ENCODE measurements at regions of chr19 and their contacts with region 1.

Region 1: DNA sequence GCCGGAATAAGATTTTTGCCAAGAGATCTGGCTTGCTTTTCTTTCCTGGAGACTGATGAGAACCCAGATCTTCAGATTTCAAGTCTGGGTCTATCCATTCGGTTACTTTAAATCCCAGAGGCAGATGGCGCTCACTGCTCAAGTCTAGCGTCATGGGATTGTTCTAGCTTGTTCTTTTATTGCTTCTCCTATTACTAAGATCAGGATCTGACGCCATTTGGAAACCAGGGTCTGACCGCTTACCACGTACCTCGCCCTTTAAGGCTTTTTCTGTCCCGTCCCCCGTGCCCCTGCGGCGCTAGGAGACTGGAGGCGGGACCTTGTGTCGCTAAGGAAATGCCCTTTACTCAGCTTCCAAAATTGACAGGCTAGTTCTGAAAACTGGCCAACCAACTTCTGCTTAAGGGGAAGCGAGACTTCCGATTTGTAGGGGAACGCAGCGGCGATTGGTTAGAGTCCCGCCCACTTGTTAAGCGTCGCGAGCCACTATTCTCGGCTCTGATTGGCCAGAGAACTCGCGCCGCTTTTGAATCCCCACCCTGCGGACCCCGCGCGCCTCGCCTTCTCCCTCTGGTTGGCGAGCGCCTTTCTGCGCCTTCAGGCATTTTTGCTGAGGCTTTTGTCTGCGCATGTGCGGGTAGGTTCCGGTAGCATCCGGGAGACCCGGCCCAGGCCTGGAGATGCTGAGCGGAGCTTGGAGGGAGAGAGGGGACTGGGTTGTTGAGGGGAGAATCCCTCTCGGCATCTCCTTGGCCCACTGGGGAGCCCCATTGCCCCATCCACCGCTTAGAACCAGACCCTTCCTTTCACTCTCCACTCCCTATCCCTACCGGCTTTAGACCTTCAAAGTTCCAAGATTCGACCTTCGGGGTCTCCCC is 3.8 kb upstream of the C19orf84 start:
- DNase-seq: peak; percentile 100
- H3K4me3 Mint-ChIP-seq: peak overlapping the region; percentile 82
- H3K27ac Mint-ChIP-seq: peak overlapping the region; percentile 78
- H3K4me1 Mint-ChIP-seq: peaks cover 7% of the 10 kb centered on the region
- H3K27me3 Mint-ChIP-seq: no peaks in the 10 kb centered on the region
- CTCF ChIP-seq: no peak

Region 2: DNA sequence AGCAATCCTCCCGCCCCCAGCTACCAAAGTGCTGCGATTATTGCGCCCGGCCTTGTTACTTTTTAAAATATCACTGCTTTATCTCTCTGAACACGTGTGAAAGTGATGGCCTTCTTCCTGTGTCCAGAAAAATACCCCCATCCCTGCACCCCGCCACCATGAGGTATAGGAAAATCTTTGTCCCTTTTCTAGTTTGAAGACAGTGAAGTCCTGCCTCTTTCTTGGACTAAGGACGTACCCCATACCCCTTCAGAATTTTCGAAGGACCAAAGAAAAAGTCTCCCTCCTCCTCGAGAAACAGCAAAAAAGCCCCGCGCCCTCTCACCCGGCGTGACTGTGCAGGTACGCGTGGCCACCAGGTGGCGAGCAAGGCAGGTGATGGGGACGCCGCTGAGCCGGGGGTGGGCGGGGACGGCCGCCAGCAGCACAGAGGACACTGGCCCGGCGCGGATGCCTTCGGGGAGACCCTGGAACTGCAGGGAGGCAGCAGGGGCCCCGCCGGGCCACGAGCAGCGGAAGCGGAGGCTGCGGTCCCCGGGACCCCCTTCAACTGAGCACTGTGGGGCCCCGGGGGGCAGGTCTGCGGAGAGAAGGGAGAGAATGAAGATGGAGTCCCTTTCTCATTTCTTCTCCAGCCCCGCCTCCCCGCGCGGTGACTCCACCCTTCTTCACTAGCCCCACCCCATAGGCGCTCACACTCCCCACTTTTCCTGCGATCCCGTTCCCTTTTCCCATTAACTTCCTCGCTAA is 55.5 kb before region 1 on chr19:
- CTCF ChIA-PET with region 1: interaction called, 15 read pairs
- POLR2A ChIA-PET with region 1: interaction called, 6 read pairs
- intact Hi-C with region 1: loop called (anchors 2 kb)
- DNase-seq: peak; percentile 83
- H3K4me3 Mint-ChIP-seq: peak overlapping the region; percentile 76
- H3K27ac Mint-ChIP-seq: peak overlapping the region; percentile 33
- H3K4me1 Mint-ChIP-seq: peaks cover 11% of the 10 kb centered on the region
- H3K27me3 Mint-ChIP-seq: no peaks in the 10 kb centered on the region
- CTCF ChIP-seq: peak; percentile 86

Region 3: DNA sequence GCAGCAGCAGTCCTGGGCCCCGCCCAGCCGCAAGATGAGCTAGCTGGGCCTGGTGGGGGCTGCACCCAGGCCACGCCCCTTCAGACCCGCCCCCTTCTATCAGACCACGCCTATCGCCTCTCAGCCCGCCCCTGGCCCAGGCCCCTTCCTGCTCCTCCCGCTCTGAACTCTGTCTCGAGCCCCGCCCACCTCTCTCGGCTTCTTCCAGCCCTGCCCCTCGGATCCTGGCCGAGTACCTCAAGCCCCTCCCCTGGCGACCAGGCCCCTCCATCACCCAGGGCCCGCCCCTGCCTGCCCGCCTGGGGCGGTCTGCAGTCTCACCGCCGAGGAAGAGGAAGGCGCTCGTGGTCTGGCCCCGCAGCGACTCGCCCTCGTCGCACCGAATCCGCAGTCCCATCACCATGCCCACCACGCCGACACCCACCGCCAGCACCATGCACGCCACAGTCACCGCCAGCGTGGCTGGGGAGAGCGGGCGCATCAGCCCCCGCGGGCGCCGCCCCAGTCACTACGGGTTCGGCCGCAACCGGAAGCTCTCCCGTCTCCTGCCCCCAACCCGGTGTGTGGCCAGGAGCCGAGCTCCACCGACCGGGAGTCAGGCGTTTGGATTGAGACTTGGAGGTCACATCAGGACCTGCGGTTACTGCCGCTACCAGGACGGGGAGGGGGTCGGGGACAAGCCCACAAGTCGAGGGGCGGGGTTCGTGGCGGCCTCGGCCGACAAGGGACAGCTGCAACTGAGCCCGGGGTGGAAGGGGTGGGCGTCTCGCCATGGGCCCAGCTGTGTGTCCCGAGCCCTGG is 26.4 kb before region 1 on chr19:
- CTCF ChIA-PET with region 1: interaction called, 9 read pairs
- POLR2A ChIA-PET with region 1: interaction called, 11 read pairs
- intact Hi-C with region 1: loop called (anchors 1 kb)
- DNase-seq: peak; percentile 98
- H3K4me3 Mint-ChIP-seq: peak overlapping the region; percentile 96
- H3K27ac Mint-ChIP-seq: peak overlapping the region; percentile 90
- H3K4me1 Mint-ChIP-seq: peaks cover 26% of the 10 kb centered on the region
- H3K27me3 Mint-ChIP-seq: no peaks in the 10 kb centered on the region
- CTCF ChIP-seq: no peak

Region 4: GRCh38 chr19:51407511-51408131 is 13.4 kb after region 1 on chr19:
- CTCF ChIA-PET with region 1: interaction called, 18 read pairs
- POLR2A ChIA-PET with region 1: interaction called, 3 read pairs
- intact Hi-C with region 1: no loop called
- DNase-seq: peak; percentile 26
- H3K4me3 Mint-ChIP-seq: no peak overlapping the region
- H3K27ac Mint-ChIP-seq: no peak overlapping the region
- H3K4me1 Mint-ChIP-seq: no peaks in the 10 kb centered on the region
- H3K27me3 Mint-ChIP-seq: no peaks in the 10 kb centered on the region
- CTCF ChIP-seq: no peak

Region 5: DNA sequence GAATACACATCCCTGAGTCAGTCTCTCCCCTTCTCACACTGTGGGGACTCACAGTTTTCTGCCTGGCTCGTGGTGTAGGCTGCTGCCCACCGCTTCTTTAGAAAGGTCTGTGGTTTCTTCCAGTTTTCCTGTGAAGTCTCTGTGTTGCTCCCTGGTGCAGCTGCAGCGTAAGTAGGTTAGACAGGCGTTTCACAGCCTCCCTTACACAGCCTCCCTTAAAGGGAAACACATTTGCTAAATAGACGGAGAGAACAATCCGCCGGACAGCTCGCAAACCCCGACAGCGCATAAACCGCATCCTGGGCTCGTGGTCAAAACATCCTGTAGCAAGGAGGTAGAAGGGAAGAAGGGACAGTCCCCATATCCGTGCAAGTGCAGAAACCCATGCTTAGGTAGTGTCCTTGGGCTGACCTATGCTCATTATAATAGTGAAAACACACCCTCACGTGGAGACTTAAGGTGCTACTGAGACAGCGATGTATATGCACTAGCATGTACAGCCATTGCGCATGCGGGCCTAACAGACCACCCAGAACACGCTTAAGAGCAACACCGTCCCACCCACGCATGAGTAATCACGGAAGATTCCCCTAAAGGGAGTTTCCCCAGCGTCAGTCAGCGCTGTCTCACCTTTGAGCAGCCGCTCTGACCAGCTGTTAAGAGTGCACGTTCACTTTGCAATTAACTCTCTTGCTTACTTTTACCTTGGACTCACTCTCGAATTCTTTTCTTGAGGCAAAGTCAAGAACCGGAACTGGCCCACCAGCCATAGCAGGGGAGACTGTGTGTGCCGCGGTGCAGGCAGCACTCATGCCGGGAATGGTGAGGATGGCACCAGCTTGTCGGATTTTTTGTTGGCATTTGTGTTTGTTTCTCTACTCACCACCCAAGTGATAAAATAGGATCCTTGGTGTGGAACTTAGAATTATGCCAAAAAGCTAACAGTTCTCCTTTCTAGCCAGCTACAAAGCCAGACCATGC is 47.5 kb after region 1 on chr19:
- CTCF ChIA-PET with region 1: interaction called, 21 read pairs
- POLR2A ChIA-PET with region 1: no interaction called
- intact Hi-C with region 1: no loop called
- DNase-seq: peak; percentile 16
- H3K4me3 Mint-ChIP-seq: no peak overlapping the region
- H3K27ac Mint-ChIP-seq: no peak overlapping the region
- H3K4me1 Mint-ChIP-seq: no peaks in the 10 kb centered on the region
- H3K27me3 Mint-ChIP-seq: peaks cover 26% of the 10 kb centered on the region
- CTCF ChIP-seq: no peak

Region 6: GRCh38 chr19:51473009-51473707 is 79.0 kb after region 1 on chr19:
- CTCF ChIA-PET with region 1: interaction called, 12 read pairs
- POLR2A ChIA-PET with region 1: no interaction called
- intact Hi-C with region 1: no loop called
- DNase-seq: peak; percentile 76
- H3K4me3 Mint-ChIP-seq: no peak overlapping the region
- H3K27ac Mint-ChIP-seq: no peak overlapping the region
- H3K4me1 Mint-ChIP-seq: no peaks in the 10 kb centered on the region
- H3K27me3 Mint-ChIP-seq: no peaks in the 10 kb centered on the region
- CTCF ChIP-seq: peak; percentile 89

Region 7: GRCh38 chr19:51514866-51515481 is 120.8 kb after region 1 on chr19:
- CTCF ChIA-PET with region 1: interaction called, 7 read pairs
- POLR2A ChIA-PET with region 1: no interaction called
- intact Hi-C with region 1: loop called (anchors 1 kb)
- DNase-seq: peak; percentile 56
- H3K4me3 Mint-ChIP-seq: no peak overlapping the region
- H3K27ac Mint-ChIP-seq: no peak overlapping the region
- H3K4me1 Mint-ChIP-seq: no peaks in the 10 kb centered on the region
- H3K27me3 Mint-ChIP-seq: no peaks in the 10 kb centered on the region
- CTCF ChIP-seq: peak; percentile 70